ENCODE measurements at regions of chr1 and their contacts with region 1.

Region 1: DNA sequence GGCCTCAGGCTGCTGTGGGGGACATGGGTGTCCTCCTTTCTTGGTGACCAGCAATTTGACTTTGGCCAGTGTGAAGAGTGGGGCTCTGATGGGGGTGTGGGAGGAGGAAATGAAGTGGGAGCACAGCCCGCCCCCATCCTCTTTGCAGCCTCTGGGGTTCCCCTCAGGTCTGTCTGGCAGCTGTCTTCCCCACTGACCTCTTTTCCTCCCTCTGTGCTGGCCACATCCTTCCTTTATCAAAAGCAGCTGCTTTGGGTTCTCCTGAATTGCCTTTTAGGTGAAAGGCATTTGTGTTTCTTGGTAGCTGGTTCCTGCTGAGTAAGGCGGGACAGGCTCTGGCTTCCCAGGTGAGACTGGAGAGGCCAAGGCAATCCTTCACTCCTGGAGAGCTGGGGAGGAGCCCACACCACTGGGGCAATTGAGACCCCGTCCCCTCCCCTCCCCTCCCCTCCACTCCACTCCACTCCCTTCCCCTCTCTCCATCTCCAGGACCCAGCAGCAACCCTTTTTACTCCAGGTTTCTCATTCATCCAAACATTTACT is 24.9 kb downstream of the PCAT6 start:
- DNase-seq: peak in 7 of 9 experiments; percentile 9 to 61 (median 31)
- ATAC-seq: peak; percentile 80
- H3K4me3 ChIP-seq: no peak overlapping the region
- H3K4me3 Mint-ChIP-seq: peak overlapping the region; percentile 23
- H3K27ac ChIP-seq: no peak overlapping the region
- H3K27ac Mint-ChIP-seq: no peak overlapping the region
- H3K4me1 ChIP-seq: peaks cover 25% of the 10 kb centered on the region
- H3K4me1 Mint-ChIP-seq: peaks cover 25% of the 10 kb centered on the region
- H3K27me3 ChIP-seq: no peaks in the 10 kb centered on the region
- H3K27me3 Mint-ChIP-seq: peaks cover 6% of the 10 kb centered on the region
- CTCF ChIP-seq: no peak

Region 2: DNA sequence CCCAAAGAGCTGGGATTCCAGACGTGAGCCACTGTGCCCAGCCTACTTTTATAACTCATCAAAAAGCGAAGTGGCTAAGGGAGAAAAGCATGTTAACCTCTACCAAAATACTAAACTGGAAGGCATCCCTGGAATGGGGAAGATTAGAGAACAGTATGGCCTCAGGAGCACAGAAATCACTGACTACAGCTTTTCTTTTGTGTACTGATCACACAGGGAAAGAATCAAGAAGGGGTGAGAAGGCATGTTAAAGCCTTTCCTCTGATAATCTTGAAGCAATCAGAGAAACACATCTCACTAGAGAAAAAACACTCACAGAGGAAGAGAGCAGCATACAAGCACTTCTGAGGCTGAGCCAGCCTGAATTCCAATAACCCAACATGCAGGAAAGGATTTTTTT is 14.2 kb before region 1 on chr1:
- CTCF ChIA-PET with region 1: no interaction called
- POLR2A ChIA-PET with region 1: no interaction called
- intact Hi-C with region 1: loop called in 1 of 2 experiments (anchors 1 kb)
- DNase-seq: no peak
- ATAC-seq: no peak
- H3K4me3 ChIP-seq: no peak overlapping the region
- H3K4me3 Mint-ChIP-seq: no peak overlapping the region
- H3K27ac ChIP-seq: no peak overlapping the region
- H3K27ac Mint-ChIP-seq: no peak overlapping the region
- H3K4me1 ChIP-seq: no peaks in the 10 kb centered on the region
- H3K4me1 Mint-ChIP-seq: no peaks in the 10 kb centered on the region
- H3K27me3 ChIP-seq: no peaks in the 10 kb centered on the region
- H3K27me3 Mint-ChIP-seq: peaks cover 2% of the 10 kb centered on the region
- CTCF ChIP-seq: no peak